MCF 10A (cell line): ENCODE measurements at regions of chr5 and their contacts with region 1.

Region 1: GRCh38 chr5:130141659-130142320 is 237.5 kb downstream of the CHSY3 start:
- DNase-seq: peak; percentile 60
- H3K4me3 Mint-ChIP-seq: no peak overlapping the region
- H3K27ac Mint-ChIP-seq: no peak overlapping the region
- H3K4me1 Mint-ChIP-seq: peaks cover 19% of the 10 kb centered on the region
- H3K27me3 Mint-ChIP-seq: no peaks in the 10 kb centered on the region
- CTCF ChIP-seq: peak; percentile 47

Region 2: DNA sequence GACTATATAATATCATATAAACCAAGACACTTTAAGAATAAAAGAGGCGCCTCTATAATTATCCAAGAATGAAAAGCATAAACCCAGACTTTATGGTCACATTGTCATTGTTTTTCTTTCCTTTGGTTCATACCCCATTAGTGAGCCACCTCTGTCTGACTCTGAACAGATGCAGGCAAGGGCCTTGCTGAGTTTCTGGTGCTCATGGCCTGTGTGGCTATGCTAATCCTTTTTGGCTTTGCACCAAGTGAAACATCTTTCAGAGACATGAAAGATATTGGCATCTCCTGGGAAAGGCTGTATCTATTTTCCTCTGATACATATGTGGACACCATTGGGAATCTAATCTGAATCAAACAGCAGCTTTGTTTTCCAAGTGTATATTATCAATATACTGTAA is 15.0 kb before region 1 on chr5:
- CTCF ChIA-PET with region 1: interaction called, 10 read pairs
- POLR2A ChIA-PET with region 1: no interaction called
- intact Hi-C with region 1: no loop called
- DNase-seq: no peak
- H3K4me3 Mint-ChIP-seq: no peak overlapping the region
- H3K27ac Mint-ChIP-seq: no peak overlapping the region
- H3K4me1 Mint-ChIP-seq: peaks cover 9% of the 10 kb centered on the region
- H3K27me3 Mint-ChIP-seq: no peaks in the 10 kb centered on the region
- CTCF ChIP-seq: no peak